Aorta (tissue), 5 donors: ENCODE measurements at regions of chr4 and their contacts with region 1.

Region 1: GRCh38 chr4:25312496-25313200 is at the start of gene ZCCHC4:
- DNase-seq: peak; percentile 93 to 94
- ATAC-seq: peak; percentile 100
- H3K4me3 ChIP-seq: peak within 1 kb of the TSS; percentile 41 to 89
- H3K27ac ChIP-seq: peak within 1 kb of the TSS in 1 of 2 donors; percentile 77
- H3K4me1 ChIP-seq: no peaks in the 10 kb centered on the region
- H3K27me3 ChIP-seq: no peaks in the 10 kb centered on the region
- total RNA-seq, gene ZCCHC4: 8.3 to 13.5 TPM

Region 2: DNA sequence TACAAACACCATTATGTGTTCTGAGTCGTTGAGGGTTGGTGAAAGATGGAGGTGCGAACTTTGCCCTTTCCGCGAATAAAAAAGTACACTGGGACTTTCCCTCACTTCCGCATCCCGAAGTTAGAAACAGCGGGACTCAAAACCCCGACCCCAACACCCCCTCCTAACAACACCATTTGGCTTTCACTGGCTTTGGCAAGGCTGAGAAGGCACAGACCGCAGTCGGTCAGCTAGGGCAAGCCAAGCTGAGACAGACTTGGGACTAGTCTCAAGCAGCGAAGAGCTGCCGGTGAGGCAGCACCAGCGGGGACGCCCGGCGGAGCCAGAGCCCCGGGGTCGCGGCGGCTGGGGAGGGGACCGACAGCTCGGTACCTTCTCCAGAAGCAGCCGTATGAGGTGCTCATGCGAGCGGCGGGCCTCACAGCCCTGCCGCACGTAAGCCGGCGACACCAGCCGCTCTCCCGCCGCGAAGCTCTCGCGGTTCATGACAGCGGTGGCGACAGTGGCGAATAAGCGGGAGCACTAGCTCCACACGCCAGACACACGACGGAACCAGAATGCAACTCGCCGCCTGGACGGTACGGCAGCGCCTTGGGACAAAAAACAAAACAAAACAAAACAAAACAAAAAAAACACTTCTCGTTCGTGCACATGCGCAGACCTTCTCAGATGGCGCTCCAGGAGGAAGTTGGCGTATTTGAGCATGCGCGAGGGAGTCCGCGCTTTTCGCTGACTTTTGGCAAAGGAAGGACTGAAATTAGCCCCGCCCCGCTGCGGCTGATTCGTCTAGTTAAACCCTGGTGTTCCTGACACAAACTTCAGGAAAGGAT is 152.5 kb before region 1 on chr4 and contains the start of gene SEPSECS:
- intact Hi-C with region 1: loop called in 1 of 2 experiments (anchors 10 kb)
- DNase-seq: peak; percentile 99
- ATAC-seq: peak; percentile 97
- H3K4me3 ChIP-seq: peak within 1 kb of the TSS; percentile 73 to 86
- H3K27ac ChIP-seq: peak within 1 kb of the TSS; percentile 85 to 99
- H3K4me1 ChIP-seq: no peaks in the 10 kb centered on the region
- H3K27me3 ChIP-seq: no peaks in the 10 kb centered on the region
- total RNA-seq, gene SEPSECS: 5.6 to 9.4 TPM

Region 3: DNA sequence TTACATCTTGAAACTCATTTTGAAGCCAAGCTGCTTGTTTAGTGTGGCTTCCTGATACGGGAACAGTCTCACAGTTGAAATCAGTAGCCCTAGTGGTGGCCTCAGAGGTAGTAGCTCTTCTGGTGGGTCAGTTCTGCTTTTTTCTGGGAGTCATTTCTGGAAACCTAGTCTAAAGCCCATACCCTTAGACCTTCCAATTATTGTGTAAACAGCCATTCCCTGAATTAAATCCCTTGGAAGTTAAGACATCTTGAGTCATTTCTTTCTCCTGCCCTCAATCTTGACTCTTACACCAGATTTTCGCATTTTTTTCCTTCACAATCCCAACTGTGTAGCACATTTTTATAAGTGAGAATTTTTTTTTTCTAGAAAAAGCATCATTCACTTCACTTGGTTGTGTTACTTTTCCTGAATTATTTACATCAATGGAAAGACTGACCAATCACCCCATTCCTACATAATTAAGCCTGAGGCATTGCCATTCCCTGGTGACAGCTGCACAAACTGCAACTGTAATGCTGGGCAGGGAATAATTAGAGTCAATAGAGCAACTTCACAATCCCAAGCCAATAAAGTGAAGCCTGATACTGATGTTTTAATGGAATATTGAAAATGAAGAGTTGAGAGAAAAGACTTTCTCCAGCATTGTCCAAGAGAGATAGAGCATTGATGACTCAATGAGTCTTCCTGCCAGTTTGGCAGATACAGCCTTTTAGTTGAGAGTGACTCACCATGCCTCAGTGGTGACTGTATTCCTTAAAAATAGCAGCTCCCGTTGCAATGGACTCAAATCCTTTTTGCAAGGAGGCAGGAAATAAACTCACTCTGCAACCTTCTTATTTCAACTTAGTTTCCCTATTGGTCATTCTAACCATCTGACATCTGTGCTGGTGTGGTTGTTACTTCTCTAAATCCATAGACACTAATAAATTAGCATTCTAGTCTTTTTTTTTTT is 139.4 kb before region 1 on chr4:
- intact Hi-C with region 1: loop called (anchors 10 kb)
- DNase-seq: peak in 1 of 2 donors; percentile 62
- ATAC-seq: peak; percentile 90
- H3K4me3 ChIP-seq: no peak overlapping the region
- H3K27ac ChIP-seq: peak overlapping the region; percentile 33 to 53
- H3K4me1 ChIP-seq: peaks cover 0 to 2% of the 10 kb centered on the region in 2 donors
- H3K27me3 ChIP-seq: no peaks in the 10 kb centered on the region

Region 4: DNA sequence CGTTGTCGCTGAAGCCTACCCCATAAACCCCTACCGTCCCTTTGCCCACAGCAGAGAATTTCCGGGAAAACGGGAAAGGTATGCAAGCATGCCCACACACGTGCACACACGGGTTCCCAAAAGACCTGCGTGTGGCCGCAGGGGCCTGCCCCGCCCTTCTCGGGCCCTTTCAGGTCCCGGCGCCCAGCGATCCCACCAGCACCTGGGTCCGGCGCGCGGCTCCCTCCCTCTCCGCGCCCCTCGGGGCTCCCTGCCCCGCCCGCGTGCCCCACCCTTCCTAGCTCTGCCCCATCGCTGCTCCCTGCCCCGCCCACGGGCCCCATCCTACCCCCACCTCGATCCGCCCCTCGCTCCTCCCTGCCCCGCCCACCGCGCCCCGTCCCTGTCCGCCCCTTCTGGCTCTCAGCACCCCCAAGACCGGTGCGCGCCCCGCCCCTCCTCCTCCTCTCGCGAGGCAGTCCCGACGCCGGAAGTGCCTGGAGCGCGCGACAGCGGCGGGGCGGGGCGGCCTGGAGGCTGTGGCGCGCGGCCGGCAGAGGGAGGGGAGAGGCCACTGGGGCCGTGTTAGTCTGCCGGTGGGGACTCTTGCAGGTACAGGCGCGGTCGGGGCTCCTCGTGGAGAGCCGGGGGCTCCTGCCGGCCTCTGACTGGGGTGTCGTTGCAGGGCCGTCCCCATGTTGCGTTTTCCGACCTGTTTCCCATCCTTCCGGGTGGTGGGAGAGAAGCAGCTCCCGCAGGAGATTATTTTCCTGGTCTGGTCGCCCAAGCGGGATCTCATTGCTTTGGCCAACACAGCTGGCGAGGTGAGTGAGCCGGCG is 64.3 kb after region 1 on chr4 and contains the start of gene ANAPC4:
- intact Hi-C with region 1: loop called (anchors 5 to 10 kb)
- DNase-seq: peak; percentile 98 to 99
- ATAC-seq: peak; percentile 98
- H3K4me3 ChIP-seq: peak within 1 kb of the TSS; percentile 88 to 95
- H3K27ac ChIP-seq: peak within 1 kb of the TSS in 1 of 2 donors; percentile 25
- H3K4me1 ChIP-seq: peaks cover 0 to 3% of the 10 kb centered on the region in 2 donors
- H3K27me3 ChIP-seq: no peaks in the 10 kb centered on the region
- total RNA-seq, gene ANAPC4: 29.3 to 41.2 TPM

Region 5: GRCh38 chr4:25981749-25982148 is 669.1 kb after region 1 on chr4:
- intact Hi-C with region 1: no loop called
- DNase-seq: no peak
- ATAC-seq: no peak
- H3K4me3 ChIP-seq: no peak overlapping the region
- H3K27ac ChIP-seq: no peak overlapping the region
- H3K4me1 ChIP-seq: no peaks in the 10 kb centered on the region
- H3K27me3 ChIP-seq: no peaks in the 10 kb centered on the region